Activated naive CD4-positive, alpha-beta T cell treated with anti-CD3 and anti-CD28 coated beads for 36 hours (primary cell): ENCODE measurements at regions of chr17 and their contacts with region 1.

Region 1: DNA sequence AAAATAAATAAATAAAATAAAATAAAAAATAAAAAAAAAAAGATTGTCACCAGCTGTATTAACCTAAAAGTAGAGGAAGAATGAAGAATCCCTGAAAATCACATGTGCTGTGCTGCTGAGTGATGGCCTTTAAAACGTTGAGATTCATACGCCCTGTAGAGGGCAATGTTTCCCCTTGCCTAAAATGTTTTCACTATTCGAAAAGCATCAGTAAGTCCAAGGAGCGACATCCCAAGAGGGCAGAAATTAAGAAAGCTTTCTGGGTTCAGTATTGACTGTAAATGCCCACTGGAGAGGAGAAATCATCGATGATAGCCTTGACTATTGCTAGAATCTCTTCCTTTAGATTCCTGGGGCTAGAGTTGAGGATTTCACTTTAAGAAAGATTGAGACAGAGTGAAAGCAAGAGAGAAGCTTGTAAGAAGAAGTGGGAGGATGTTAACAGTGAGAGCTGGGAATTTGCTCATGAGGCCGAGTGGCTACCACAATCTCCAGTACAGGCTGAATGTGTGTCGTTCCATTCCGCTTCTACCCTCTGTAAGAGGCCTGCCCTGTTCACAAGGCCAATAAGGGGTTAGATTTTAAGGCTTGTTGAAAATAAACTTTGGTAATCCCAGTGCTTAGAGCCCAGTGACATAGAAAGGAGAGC is 170.8 kb upstream of the FAM20A start:
- DNase-seq: no peak
- H3K4me3 Mint-ChIP-seq: no peak overlapping the region
- H3K27ac Mint-ChIP-seq: no peak overlapping the region
- H3K4me1 Mint-ChIP-seq: peaks cover 2% of the 10 kb centered on the region
- H3K27me3 Mint-ChIP-seq: no peaks in the 10 kb centered on the region

Region 2: DNA sequence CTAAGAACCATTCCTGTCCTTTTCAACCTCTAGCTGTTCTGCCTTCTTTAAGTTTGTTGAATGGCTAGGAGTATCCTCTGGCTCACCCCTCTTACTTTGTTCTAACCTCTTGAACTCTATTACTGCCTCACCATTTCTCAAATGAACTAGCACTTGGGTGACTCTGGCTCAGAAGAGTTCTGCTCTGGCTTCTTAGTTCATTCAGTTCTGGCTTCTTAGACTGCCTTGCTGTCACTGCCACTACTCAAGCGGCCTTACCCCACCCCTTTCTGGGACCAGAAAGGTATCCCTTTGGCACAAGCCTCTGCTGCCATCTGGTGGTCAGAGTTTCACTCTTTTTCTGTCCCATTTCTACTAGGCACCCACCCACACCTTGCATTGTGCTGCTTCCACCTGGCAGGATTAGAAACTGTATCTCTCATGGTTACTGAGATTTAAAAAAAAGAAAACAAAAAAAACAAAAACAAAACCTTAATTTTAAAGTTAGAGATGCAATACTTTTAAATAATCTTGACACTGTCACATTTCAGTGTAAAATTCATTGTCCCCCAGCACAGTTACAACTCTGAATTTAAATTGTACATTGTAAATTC is 463.4 kb after region 1 on chr17:
- CTCF ChIA-PET with region 1: interaction called, 3 read pairs
- intact Hi-C with region 1: loop called (anchors 1 kb)
- DNase-seq: peak; percentile 76
- H3K4me3 Mint-ChIP-seq: no peak overlapping the region
- H3K27ac Mint-ChIP-seq: no peak overlapping the region
- H3K4me1 Mint-ChIP-seq: no peaks in the 10 kb centered on the region
- H3K27me3 Mint-ChIP-seq: no peaks in the 10 kb centered on the region